ENCODE measurements at regions of chr7 and their contacts with region 1.

Region 1: GRCh38 chr7:141231018-141231792 is 157.3 kb downstream of the TMEM178B start:
- DNase-seq: peak; percentile 58
- ATAC-seq: peak; percentile 88
- H3K4me3 Mint-ChIP-seq: no peak overlapping the region
- H3K27ac Mint-ChIP-seq: no peak overlapping the region
- H3K4me1 Mint-ChIP-seq: peaks cover 52% of the 10 kb centered on the region
- H3K27me3 Mint-ChIP-seq: no peaks in the 10 kb centered on the region
- CTCF ChIP-seq: no peak

Region 2: GRCh38 chr7:141072548-141073172 is 158.5 kb before region 1 on chr7:
- CTCF ChIA-PET with region 1: interaction called, 13 read pairs
- POLR2A ChIA-PET with region 1: no interaction called
- DNase-seq: peak; percentile 55
- ATAC-seq: peak; percentile 10
- H3K4me3 Mint-ChIP-seq: peak overlapping the region; percentile 88
- H3K27ac Mint-ChIP-seq: no peak overlapping the region
- H3K4me1 Mint-ChIP-seq: peaks cover 24% of the 10 kb centered on the region
- H3K27me3 Mint-ChIP-seq: peaks cover 32% of the 10 kb centered on the region
- CTCF ChIP-seq: no peak